Activated CD4-positive, alpha-beta T cell treated with anti-CD3 and anti-CD28 coated beads, Interleukin-2, amount 10 ng/mL, durations not matched to agents 24 days and 14 days (primary cell): ENCODE measurements at regions of chr2 and their contacts with region 1.

Region 1: DNA sequence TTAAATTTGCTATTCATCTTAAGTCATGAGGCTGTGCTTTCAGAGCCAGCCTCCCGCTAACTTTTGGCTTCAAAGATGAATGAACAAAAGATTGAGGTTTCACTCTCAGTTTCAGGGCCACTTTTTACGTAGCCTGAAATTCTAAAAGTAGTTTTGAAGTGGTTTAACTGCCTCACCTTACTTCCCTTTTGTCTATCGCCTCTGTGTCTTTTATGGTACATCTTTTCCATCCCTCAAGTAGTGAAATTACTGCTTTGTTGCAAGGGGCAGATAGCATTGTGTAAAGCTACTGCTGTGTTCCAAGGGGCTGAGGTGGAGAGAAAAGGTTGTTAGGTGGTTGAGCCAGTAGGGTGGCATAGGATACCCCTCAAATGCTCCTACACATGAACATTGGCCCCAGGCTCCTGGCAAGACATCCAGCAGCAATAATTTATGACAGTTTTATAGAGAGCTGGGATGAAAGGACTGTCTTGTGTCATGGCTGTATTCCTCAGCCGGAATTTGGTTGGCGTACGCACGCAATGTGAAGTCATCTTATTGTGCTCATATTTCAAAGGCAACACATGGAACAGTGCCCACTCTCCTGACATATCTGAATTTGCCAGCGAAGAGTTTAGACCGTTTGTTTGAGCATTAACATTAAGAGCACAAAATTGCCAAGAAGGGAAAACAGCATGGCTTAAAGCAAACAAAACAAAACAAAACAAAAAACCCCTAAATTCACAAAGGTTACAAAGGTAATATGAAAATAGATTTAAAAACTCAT is 32.2 kb downstream of the QPCT start:
- DNase-seq: peak; percentile 85
- H3K4me3 Mint-ChIP-seq: peak overlapping the region; percentile 77
- H3K27ac Mint-ChIP-seq: peak overlapping the region; percentile 89
- H3K4me1 Mint-ChIP-seq: peaks cover 32% of the 10 kb centered on the region
- H3K27me3 Mint-ChIP-seq: peaks cover 49% of the 10 kb centered on the region

Region 2: GRCh38 chr2:37324786-37325624 is 51.6 kb before region 1 on chr2 and contains the start of gene PRKD3:
- intact Hi-C with region 1: loop called (anchors 1 kb)
- DNase-seq: peak; percentile 89
- H3K4me3 Mint-ChIP-seq: peak within 1 kb of the TSS; percentile 95
- H3K27ac Mint-ChIP-seq: peak within 1 kb of the TSS; percentile 92
- H3K4me1 Mint-ChIP-seq: peaks cover 27% of the 10 kb centered on the region
- H3K27me3 Mint-ChIP-seq: peaks cover 48% of the 10 kb centered on the region
- total RNA-seq, gene PRKD3: 20.2 and 21.9 TPM in 2 replicates

Region 3: GRCh38 chr2:37344453-37345361 is 31.9 kb before region 1 on chr2 and contains the start of gene QPCT:
- intact Hi-C with region 1: loop called (anchors 5 kb)
- DNase-seq: peak; percentile 79
- H3K4me3 Mint-ChIP-seq: peak within 1 kb of the TSS; percentile 83
- H3K27ac Mint-ChIP-seq: no peak within 1 kb of the TSS
- H3K4me1 Mint-ChIP-seq: peaks cover 22% of the 10 kb centered on the region
- H3K27me3 Mint-ChIP-seq: peaks cover 82% of the 10 kb centered on the region
- total RNA-seq, gene QPCT: 2.0 and 2.1 TPM in 2 replicates

Region 4: DNA sequence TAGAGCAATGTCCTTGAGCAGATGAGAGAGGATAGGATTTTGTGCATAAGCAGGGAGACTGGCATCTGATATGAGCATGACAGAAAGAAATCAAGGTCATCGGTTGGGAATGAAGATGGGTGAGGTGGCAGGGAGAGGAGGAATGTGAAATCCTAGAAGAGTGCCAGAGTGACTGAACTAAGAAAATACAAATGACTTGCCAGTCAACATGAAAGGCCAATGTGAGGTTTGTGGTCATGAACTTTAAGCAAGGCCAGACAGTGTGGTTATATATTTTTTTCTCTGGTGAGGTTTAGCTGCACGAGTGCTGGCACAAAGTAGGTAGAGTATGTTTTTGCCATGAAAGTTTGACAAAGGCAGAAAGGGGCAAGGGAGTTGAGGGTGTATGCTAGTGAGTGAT is 10.9 kb before region 1 on chr2:
- intact Hi-C with region 1: loop called (anchors 1 kb)
- DNase-seq: peak; percentile 61
- H3K4me3 Mint-ChIP-seq: no peak overlapping the region
- H3K27ac Mint-ChIP-seq: no peak overlapping the region
- H3K4me1 Mint-ChIP-seq: peaks cover 13% of the 10 kb centered on the region
- H3K27me3 Mint-ChIP-seq: peaks cover 33% of the 10 kb centered on the region

Region 5: GRCh38 chr2:37623971-37624900 is 247.6 kb after region 1 on chr2:
- intact Hi-C with region 1: loop called (anchors 1 kb)
- DNase-seq: no peak
- H3K4me3 Mint-ChIP-seq: peak overlapping the region; percentile 49
- H3K27ac Mint-ChIP-seq: peak overlapping the region; percentile 71
- H3K4me1 Mint-ChIP-seq: peaks cover 34% of the 10 kb centered on the region
- H3K27me3 Mint-ChIP-seq: peaks cover 5% of the 10 kb centered on the region

Region 6: DNA sequence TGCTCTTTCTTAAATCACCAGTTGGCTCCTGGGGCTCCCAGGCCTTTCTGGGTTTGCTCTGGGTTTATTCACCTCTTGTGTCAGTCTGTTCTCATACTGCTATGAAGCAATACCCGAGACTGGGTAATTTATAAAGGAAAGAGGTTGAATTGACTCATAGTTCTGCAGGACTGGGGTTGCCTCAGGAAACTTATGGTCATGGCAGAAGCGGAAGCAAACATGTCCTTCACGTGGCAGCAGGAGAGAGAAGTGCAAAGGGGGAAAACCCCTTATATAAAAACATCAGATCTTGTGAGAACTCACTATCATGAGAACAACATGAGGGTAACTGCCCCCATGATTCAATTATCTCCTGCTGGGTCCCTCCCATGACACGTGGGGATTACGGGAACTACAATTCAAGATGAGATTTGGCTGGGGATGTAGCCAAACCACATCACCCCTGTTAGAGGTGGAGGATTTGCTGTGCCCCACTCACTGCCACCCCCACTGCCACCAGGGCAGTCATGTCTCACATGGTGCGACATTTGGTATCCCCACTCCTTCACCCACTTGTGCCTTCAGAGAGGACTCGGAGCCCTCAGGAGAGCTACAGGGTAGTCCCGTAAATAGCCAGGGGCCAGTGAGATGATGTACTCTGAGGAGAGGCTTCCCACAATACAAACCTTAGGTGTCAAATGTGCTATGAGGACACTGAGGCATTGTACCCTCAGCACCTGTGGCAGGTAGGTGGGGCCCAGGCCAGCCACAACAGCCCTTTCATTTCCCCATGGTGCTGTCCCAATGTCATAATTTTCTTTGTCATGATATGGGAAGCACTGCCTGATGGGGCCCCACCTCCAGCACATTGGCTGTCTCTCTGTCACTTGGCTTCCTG is 259.1 kb after region 1 on chr2:
- intact Hi-C with region 1: loop called (anchors 5 kb)
- DNase-seq: peak; percentile 89
- H3K4me3 Mint-ChIP-seq: peak overlapping the region; percentile 46
- H3K27ac Mint-ChIP-seq: peak overlapping the region; percentile 83
- H3K4me1 Mint-ChIP-seq: peaks cover 31% of the 10 kb centered on the region
- H3K27me3 Mint-ChIP-seq: peaks cover 13% of the 10 kb centered on the region

Region 7: GRCh38 chr2:37871456-37872191 is 495.0 kb after region 1 on chr2:
- intact Hi-C with region 1: loop called (anchors 1 kb)
- DNase-seq: no peak
- H3K4me3 Mint-ChIP-seq: peak overlapping the region; percentile 69
- H3K27ac Mint-ChIP-seq: peak overlapping the region; percentile 94
- H3K4me1 Mint-ChIP-seq: peaks cover 45% of the 10 kb centered on the region
- H3K27me3 Mint-ChIP-seq: peaks cover 2% of the 10 kb centered on the region